ENCODE measurements at regions of chr1 and their contacts with region 1.

Region 1: DNA sequence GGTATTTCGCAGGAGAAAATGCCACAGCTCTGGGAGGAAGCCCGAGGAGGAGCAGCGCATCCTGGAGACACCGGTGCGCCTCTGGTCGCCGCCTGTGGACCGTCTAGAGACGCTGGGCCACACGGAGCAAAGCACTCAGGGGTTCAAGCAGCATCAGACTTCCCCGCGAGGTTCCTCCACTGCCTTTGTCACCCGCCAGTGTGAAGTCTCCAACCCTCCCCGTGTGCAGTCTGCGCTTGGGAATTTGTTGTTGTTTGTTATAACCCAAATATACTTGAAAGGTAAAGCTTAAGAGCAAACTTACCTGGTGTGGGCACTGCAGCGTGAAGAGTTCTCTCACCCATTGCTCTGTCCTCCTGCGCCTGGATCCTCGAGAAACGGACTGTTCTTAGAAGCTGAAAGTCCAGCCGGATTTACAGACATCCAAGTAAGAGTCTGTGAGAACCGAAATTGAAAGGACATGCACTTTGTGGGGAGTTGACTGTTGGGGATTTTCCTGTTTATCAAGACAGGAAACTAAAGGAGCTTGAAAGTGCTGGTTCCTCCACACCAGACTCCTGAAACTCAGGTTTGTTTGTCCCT is at the start of gene GBP4:
- DNase-seq: peak in 8 of 9 experiments; percentile 31 to 84 (median 55)
- ATAC-seq: peak; percentile 50
- H3K4me3 ChIP-seq: peak within 1 kb of the TSS; percentile 70 to 87
- H3K4me3 Mint-ChIP-seq: peak within 1 kb of the TSS; percentile 95
- H3K27ac ChIP-seq: peak within 1 kb of the TSS; percentile 80 to 86
- H3K27ac Mint-ChIP-seq: peak within 1 kb of the TSS; percentile 93
- H3K4me1 ChIP-seq: peaks cover 57% of the 10 kb centered on the region
- H3K4me1 Mint-ChIP-seq: peaks cover 68% of the 10 kb centered on the region
- H3K27me3 ChIP-seq: no peaks in the 10 kb centered on the region
- H3K27me3 Mint-ChIP-seq: no peaks in the 10 kb centered on the region
- CTCF ChIP-seq: no peak
- total RNA-seq, gene GBP4: 16.6 to 17.5 TPM

Region 2: DNA sequence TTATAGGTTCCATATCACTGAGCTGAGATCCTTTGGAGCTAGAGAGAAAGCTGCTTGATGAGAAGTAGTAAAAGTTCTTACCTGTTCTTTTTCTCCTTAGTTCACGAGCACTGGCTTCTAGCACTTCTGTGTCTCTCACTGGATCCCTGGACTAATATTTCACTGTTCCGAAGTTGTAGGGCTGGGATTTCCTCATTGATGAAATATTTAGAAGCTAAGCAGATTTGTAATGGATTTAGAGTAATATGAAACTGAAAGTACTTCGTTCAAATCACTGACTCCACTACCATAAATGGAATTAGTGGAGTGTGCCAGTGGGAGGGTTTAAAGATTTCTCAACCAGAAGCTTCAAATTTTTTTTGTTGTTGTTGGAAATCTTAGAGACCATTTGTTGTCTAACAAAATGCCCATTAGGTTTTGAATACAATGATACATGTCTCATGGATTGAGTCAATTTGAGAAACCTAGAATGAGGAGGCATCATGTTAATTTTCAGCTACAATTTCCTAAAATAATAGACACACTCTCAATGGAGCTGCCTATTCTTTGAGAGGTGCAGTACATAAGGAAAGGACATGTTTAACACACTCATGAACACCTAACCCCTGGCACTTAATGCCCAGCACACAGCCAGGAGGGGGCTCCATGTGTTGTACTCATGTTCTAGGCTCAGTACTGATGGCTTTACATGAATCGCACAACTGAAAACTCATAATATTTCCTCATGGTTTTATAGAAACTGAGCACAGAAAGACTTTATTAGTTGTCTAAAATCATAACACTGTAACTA is 133.3 kb before region 1 on chr1 and contains the start of gene GBP1:
- CTCF ChIA-PET with region 1: no interaction called
- POLR2A ChIA-PET with region 1: interaction called, 3 read pairs
- intact Hi-C with region 1: loop called (anchors 5 kb)
- DNase-seq: peak in 2 of 9 experiments; percentile 63 to 78
- ATAC-seq: peak; percentile 85
- H3K4me3 ChIP-seq: peak within 1 kb of the TSS; percentile 60 to 68
- H3K4me3 Mint-ChIP-seq: peak within 1 kb of the TSS; percentile 98
- H3K27ac ChIP-seq: peak within 1 kb of the TSS; percentile 65 to 80
- H3K27ac Mint-ChIP-seq: peak within 1 kb of the TSS; percentile 98
- H3K4me1 ChIP-seq: peaks cover 35% of the 10 kb centered on the region
- H3K4me1 Mint-ChIP-seq: peaks cover 63% of the 10 kb centered on the region
- H3K27me3 ChIP-seq: no peaks in the 10 kb centered on the region
- H3K27me3 Mint-ChIP-seq: no peaks in the 10 kb centered on the region
- CTCF ChIP-seq: no peak
- total RNA-seq, gene GBP1: 20.8 to 25.9 TPM

Region 3: DNA sequence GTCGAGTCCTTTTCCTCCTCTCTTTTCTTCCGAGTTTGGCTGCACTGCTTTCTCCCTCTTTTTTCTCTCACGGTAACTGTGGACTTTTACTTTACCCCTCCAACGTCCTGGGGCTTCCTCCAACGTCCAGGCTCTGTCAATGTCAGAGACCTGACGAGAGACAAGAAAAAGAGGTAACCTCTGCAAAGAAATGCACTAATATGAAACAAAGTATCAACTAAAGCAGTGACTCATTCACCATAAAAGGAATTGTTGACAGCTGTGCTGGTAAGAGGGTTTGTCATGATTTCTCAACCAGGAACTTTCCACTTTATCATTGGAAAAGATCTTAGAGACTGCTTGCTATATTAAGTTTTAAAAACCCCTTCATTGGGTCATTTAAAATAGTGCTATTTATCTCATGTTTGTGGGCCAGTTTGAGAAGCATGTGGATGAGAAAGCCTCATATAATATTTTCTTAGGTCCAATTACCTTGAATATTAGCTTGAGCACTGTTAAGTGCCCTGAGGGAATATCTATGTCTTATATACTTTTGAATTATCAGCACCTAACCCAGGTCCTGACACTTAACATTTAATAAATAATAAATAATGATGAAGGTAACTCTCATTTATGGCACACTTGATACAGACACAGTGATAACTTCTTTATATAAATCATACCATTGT is 72.5 kb before region 1 on chr1 and contains the start of gene GBP2:
- CTCF ChIA-PET with region 1: interaction called, 3 read pairs
- POLR2A ChIA-PET with region 1: interaction called, 4 read pairs
- intact Hi-C with region 1: loop called (anchors 2 kb)
- DNase-seq: peak in 5 of 9 experiments; percentile 24 to 77 (median 44)
- ATAC-seq: peak; percentile 74
- H3K4me3 ChIP-seq: peak within 1 kb of the TSS; percentile 59 to 75
- H3K4me3 Mint-ChIP-seq: peak within 1 kb of the TSS; percentile 97
- H3K27ac ChIP-seq: peak within 1 kb of the TSS; percentile 59 to 78
- H3K27ac Mint-ChIP-seq: peak within 1 kb of the TSS; percentile 99
- H3K4me1 ChIP-seq: peaks cover 39% of the 10 kb centered on the region
- H3K4me1 Mint-ChIP-seq: peaks cover 66% of the 10 kb centered on the region
- H3K27me3 ChIP-seq: no peaks in the 10 kb centered on the region
- H3K27me3 Mint-ChIP-seq: no peaks in the 10 kb centered on the region
- CTCF ChIP-seq: no peak
- total RNA-seq, gene GBP2: 120 to 125 TPM

Region 4: GRCh38 chr1:89171067-89171438 is 27.5 kb before region 1 on chr1:
- CTCF ChIA-PET with region 1: no interaction called
- POLR2A ChIA-PET with region 1: no interaction called
- intact Hi-C with region 1: no loop called
- DNase-seq: no peak
- ATAC-seq: no peak
- H3K4me3 ChIP-seq: no peak overlapping the region
- H3K4me3 Mint-ChIP-seq: no peak overlapping the region
- H3K27ac ChIP-seq: no peak overlapping the region
- H3K27ac Mint-ChIP-seq: no peak overlapping the region
- H3K4me1 ChIP-seq: no peaks in the 10 kb centered on the region
- H3K4me1 Mint-ChIP-seq: no peaks in the 10 kb centered on the region
- H3K27me3 ChIP-seq: no peaks in the 10 kb centered on the region
- H3K27me3 Mint-ChIP-seq: no peaks in the 10 kb centered on the region
- CTCF ChIP-seq: no peak

Region 5: DNA sequence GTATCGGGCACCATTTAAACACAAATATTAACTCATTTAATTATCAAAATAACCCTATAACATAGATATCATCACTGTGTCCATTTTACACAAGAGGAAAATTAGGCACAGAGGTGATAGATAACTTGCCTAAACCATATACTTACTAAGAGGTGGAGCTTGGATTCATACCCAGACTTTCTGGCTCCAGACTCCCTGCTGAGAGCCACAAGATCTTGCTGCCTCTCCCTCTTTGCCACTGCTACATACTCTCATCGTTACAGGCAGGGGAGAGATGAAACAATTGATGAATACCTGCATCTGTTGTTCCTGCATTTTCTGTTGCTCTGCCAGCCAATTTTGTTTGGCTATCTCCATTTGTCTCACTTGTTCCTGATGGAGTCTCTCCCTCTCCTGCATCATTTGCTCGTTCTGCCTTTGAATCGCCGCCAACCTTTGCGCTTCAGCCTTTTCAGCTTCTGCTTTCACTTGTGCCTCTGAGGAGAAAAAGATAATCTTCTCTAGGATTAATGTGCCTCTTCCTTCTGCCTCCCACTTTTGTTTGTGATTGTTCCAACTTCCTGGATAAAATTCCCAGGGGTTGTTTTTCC is 63.4 kb after region 1 on chr1:
- CTCF ChIA-PET with region 1: interaction called, 3 read pairs
- POLR2A ChIA-PET with region 1: interaction called, 10 read pairs
- intact Hi-C with region 1: loop called (anchors 1 to 5 kb)
- DNase-seq: no peak
- ATAC-seq: no peak
- H3K4me3 ChIP-seq: no peak overlapping the region
- H3K4me3 Mint-ChIP-seq: peak overlapping the region; percentile 32
- H3K27ac ChIP-seq: peak overlapping the region in 1 of 2 experiments; percentile 55
- H3K27ac Mint-ChIP-seq: peak overlapping the region; percentile 78
- H3K4me1 ChIP-seq: peaks cover 58% of the 10 kb centered on the region
- H3K4me1 Mint-ChIP-seq: peaks cover 82% of the 10 kb centered on the region
- H3K27me3 ChIP-seq: no peaks in the 10 kb centered on the region
- H3K27me3 Mint-ChIP-seq: no peaks in the 10 kb centered on the region
- CTCF ChIP-seq: no peak

Region 6: GRCh38 chr1:89286549-89287180 is 88.1 kb after region 1 on chr1:
- CTCF ChIA-PET with region 1: no interaction called
- POLR2A ChIA-PET with region 1: interaction called, 3 read pairs
- intact Hi-C with region 1: loop called in 1 of 2 experiments (anchors 5 kb)
- DNase-seq: peak in 2 of 9 experiments; percentile 33 to 63
- ATAC-seq: peak; percentile 70
- H3K4me3 ChIP-seq: peak overlapping the region; percentile 25 to 30
- H3K4me3 Mint-ChIP-seq: peak overlapping the region; percentile 74
- H3K27ac ChIP-seq: peak overlapping the region; percentile 26 to 75
- H3K27ac Mint-ChIP-seq: peak overlapping the region; percentile 90
- H3K4me1 ChIP-seq: peaks cover 48% of the 10 kb centered on the region
- H3K4me1 Mint-ChIP-seq: peaks cover 61% of the 10 kb centered on the region
- H3K27me3 ChIP-seq: no peaks in the 10 kb centered on the region
- H3K27me3 Mint-ChIP-seq: no peaks in the 10 kb centered on the region
- CTCF ChIP-seq: no peak